GM10248 (cell line): ENCODE measurements at regions of chr1 and their contacts with region 1.

Region 1: GRCh38 chr1:58919959-58920321 is 136.1 kb upstream of the JUN start:
- DNase-seq: no peak
- CTCF ChIP-seq: no peak

Region 2: GRCh38 chr1:58829861-58830260 is 90.1 kb before region 1 on chr1:
- CTCF ChIA-PET with region 1: no interaction called
- POLR2A ChIA-PET with region 1: no interaction called
- DNase-seq: no peak
- CTCF ChIP-seq: no peak

Region 3: DNA sequence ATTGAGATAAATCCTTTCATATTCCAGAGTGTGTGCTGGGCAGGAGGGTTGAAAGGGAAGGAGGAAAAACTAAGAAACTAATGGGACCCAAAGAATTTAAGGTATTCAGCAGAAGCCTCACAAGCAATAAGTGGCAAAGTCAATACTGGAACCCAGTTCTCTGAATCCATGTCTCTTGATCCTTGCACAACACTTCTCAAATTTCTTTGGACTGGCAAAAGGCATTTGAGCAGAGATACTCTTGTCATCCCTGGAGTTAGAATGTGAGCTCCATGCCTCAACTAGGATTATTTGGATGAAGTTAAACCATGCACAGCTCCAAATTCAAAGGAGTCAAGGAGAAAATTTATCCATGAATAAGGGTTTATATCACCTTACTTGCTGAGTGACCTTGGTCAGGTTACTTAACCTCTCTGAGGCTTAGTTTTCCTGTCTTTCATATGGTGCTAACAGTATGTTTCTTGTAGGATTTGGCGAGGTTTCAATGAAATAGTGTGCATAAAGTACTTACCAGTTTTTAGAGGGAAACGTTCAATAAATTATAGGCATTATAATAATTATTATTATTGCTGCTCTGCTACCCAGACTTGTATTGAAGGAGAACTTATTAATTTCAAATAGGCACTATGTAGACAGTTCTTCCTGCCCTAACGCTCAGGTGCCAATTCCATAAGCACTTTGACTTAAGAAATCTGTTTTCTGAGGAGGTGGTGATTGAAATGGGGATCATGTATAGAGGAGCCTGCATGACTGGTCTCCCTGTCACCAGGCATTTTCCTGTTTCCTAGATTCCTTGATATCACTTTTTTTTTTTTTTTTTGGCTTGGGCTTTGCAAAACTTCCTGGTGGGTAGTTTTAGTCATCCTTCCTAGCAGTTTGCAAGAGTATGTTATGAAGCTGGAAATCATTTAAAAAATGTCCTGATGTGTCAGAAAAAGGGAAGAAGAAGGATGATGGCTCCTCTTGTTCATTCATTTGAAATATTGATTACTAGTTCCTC is 11.1 kb before region 1 on chr1:
- CTCF ChIA-PET with region 1: interaction called, 16 read pairs
- POLR2A ChIA-PET with region 1: no interaction called
- DNase-seq: no peak
- CTCF ChIP-seq: no peak